Posterior cingulate gyrus (tissue), 11 donors: ENCODE measurements at regions of chr6 and their contacts with region 1.

Region 1: GRCh38 chr6:166275714-166276166 is 32.5 kb downstream of the PRR18 start:
- DNase-seq: peak; percentile 66 to 97 (median 80)

Region 2: GRCh38 chr6:166156942-166157341 is 118.8 kb before region 1 on chr6:
- intact Hi-C with region 1: loop called (anchors 5 kb)
- DNase-seq: no peak

Region 3: GRCh38 chr6:166308033-166308768 is 32.5 kb after region 1 on chr6 and contains the start of gene PRR18:
- intact Hi-C with region 1: loop called (anchors 2 kb)
- DNase-seq: peak; percentile 68 to 97 (median 78)

Region 4: DNA sequence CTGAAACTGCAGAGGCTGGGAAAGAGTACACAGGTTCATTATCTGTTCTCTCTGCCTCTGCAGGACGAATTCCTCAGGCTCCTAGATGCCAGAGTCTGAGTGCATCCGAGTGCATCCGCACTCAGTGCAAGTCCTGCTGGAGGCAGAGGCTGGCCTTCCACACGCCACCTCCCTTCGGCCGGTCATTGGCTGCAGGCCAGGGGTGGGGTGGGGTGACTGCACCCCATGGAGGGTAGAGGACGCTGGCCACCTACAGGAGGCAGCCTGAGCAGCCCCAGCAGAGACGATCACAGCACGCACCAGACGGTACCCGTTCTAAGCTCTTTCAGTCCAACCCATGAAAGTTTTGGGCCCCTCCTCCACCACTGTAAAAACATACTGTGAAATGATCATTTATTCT is 54.9 kb after region 1 on chr6:
- intact Hi-C with region 1: loop called (anchors 2 kb)
- DNase-seq: peak; percentile 50 to 97 (median 82)

Region 5: DNA sequence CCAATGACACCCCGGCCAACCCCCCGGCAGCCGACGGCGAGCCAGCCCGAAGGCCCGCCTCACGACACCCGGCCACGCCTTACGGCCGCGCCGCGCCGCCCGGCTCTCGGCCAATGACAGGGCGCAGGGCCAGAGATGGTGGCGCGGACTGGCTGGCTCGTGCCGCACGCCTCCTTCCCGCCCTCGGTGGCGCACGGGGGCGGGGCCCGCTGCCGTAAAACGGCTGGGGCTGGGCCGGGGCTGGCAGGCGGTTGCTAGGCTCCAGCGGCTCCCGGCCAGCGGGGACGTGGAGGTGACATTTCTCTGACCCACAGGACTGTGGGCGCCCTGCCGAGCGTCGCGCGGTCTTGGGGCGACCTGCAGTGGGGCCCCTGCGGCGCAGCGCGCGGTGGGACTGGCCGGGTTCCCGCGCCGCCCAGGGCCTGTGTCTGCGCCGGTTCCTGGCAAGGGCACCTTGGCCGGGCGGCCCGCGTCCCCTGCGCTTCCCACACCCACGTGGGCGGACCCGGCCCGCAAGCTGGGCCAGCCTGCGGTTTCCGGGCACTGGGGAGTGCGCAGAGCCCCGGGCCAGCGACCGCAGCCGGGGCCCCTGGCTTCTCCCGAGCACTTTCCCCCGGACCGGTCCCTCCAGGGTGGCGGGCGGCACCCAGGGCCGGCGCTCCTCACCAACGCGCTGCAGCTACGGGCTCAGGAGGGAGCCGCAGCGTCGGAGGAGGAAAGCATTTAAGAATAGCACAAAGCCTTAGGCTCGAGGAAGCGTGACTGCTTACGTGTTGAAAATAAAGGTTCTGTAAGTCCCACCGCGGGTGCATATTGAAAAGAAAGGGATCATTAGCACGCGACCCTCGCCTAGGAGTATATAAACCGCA is 107.4 kb after region 1 on chr6 and contains the start of gene MPC1:
- intact Hi-C with region 1: loop called (anchors 5 kb)
- DNase-seq: peak; percentile 92 to 99 (median 96)

Region 6: GRCh38 chr6:166400181-166400580 is 124.4 kb after region 1 on chr6:
- intact Hi-C with region 1: loop called (anchors 1 kb)
- DNase-seq: no peak